Activated CD4-positive, alpha-beta T cell treated with anti-CD3 and anti-CD28 coated beads, Interleukin-2, amount 10 ng/mL, durations not matched to agents 24 days and 14 days (primary cell): ENCODE measurements at regions of chr1 and their contacts with region 1.

Region 1: GRCh38 chr1:110209715-110210603 is at the start of gene KCNC4:
- DNase-seq: peak; percentile 97
- H3K4me3 Mint-ChIP-seq: peak within 1 kb of the TSS; percentile 94
- H3K27ac Mint-ChIP-seq: peak within 1 kb of the TSS; percentile 94
- H3K4me1 Mint-ChIP-seq: peaks cover 42% of the 10 kb centered on the region
- H3K27me3 Mint-ChIP-seq: peaks cover 7% of the 10 kb centered on the region
- total RNA-seq, gene KCNC4: 19.5 and 20.0 TPM in 2 replicates

Region 2: GRCh38 chr1:110034451-110035235 is 175.3 kb before region 1 on chr1 and contains the start of gene STRIP1:
- intact Hi-C with region 1: loop called (anchors 1 kb)
- DNase-seq: peak; percentile 98
- H3K4me3 Mint-ChIP-seq: peak within 1 kb of the TSS; percentile 97
- H3K27ac Mint-ChIP-seq: peak within 1 kb of the TSS; percentile 86
- H3K4me1 Mint-ChIP-seq: peaks cover 46% of the 10 kb centered on the region
- H3K27me3 Mint-ChIP-seq: no peaks in the 10 kb centered on the region
- total RNA-seq, gene STRIP1: 41.0 and 43.8 TPM in 2 replicates

Region 3: DNA sequence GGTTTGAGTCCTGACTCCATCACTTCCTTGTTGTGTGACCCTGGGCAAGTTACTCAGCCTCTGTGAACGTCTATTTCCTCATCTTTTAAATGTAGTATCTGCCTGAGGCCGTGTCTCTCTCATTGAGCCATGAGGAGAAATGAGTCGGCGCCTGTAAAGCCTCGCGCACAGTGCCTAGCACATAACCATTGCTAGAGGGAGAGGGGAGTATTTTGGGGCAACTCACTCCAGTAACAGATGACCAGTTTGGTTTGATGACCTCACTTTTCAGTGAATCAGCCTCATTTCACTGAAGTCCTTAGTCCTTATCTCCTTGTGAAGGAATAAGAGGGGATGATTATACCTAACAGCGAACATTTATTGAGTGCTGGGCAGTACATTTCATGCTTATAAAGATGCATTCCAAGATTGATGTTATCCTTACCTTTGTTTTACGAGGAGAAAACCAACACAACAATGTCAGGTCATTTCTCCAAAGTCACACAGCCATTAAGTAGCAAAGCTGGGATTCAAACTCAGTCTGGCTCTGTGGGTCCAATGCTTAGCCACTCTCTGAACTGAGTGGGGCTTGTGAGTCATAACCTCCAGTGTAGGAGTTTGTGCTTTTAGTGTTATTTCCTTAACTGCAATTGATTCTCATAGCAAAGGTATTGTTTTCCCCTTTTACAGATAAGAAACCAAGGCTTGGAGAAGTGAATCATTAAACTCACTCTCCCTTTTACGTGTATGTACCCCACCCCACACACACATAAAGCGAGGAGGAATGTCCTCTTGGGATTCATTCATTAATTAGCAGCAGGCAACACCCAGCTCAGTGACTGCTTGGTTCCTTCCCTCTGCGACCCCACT is 26.1 kb after region 1 on chr1:
- intact Hi-C with region 1: loop called (anchors 1 kb)
- DNase-seq: no peak
- H3K4me3 Mint-ChIP-seq: peak overlapping the region; percentile 74
- H3K27ac Mint-ChIP-seq: peak overlapping the region; percentile 93
- H3K4me1 Mint-ChIP-seq: peaks cover 39% of the 10 kb centered on the region
- H3K27me3 Mint-ChIP-seq: no peaks in the 10 kb centered on the region

Region 4: GRCh38 chr1:110262846-110263631 is 53.1 kb after region 1 on chr1:
- intact Hi-C with region 1: loop called (anchors 1 kb)
- DNase-seq: peak; percentile 65
- H3K4me3 Mint-ChIP-seq: no peak overlapping the region
- H3K27ac Mint-ChIP-seq: no peak overlapping the region
- H3K4me1 Mint-ChIP-seq: peaks cover 7% of the 10 kb centered on the region
- H3K27me3 Mint-ChIP-seq: peaks cover 2% of the 10 kb centered on the region

Region 5: GRCh38 chr1:110312188-110313121 is 102.5 kb after region 1 on chr1:
- intact Hi-C with region 1: loop called (anchors 1 kb)
- DNase-seq: peak; percentile 91
- H3K4me3 Mint-ChIP-seq: no peak overlapping the region
- H3K27ac Mint-ChIP-seq: no peak overlapping the region
- H3K4me1 Mint-ChIP-seq: no peaks in the 10 kb centered on the region
- H3K27me3 Mint-ChIP-seq: no peaks in the 10 kb centered on the region

Region 6: GRCh38 chr1:110407260-110408210 is 197.6 kb after region 1 on chr1 and contains the start of gene LAMTOR5:
- intact Hi-C with region 1: loop called (anchors 1 kb)
- DNase-seq: peak; percentile 98
- H3K4me3 Mint-ChIP-seq: peak within 1 kb of the TSS; percentile 99
- H3K27ac Mint-ChIP-seq: peak within 1 kb of the TSS; percentile 98
- H3K4me1 Mint-ChIP-seq: peaks cover 17% of the 10 kb centered on the region
- H3K27me3 Mint-ChIP-seq: no peaks in the 10 kb centered on the region
- total RNA-seq, gene LAMTOR5: 170 and 180 TPM in 2 replicates